ENCODE measurements at regions of chr7 and their contacts with region 1.

Region 1: DNA sequence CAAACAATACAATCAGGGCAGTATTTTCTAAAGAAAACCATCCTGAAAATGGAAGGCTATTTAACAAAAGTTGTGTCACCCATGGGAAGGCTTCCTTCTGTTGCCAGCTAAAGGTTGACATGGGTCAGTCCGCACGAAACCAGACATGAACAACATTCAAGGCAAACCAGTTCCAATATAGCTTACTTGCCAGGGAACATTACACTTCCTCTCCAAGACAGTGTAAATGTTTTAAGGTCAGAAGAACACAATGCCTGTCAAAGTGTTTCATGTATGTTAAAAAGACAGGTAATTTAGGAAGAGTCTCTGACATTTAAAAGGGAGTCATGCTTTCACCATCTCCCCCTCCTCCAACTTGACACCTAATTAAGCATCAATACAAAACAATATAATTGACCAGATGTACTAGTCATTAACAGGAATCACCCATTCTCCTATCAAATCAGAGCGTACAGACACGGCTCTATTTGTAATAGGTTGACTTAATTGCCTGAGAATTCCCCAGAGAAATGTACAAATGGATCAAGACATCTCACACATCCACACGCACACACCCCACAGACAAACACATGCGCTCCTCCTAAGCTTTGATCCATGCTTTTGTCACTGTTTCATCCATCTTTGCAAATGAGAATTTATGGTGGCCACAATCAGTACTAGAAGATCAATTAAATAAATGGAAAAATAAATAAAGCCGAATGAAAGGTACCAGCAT is 69.5 kb downstream of the CACNA2D1 start:
- DNase-seq: no peak
- ATAC-seq: peak; percentile 5; the same call in 2 of the 3 replicates
- H3K4me3 ChIP-seq: no peak overlapping the region
- H3K27ac ChIP-seq: no peak overlapping the region
- H3K4me1 ChIP-seq: no peaks in the 10 kb centered on the region
- H3K27me3 ChIP-seq: no peaks in the 10 kb centered on the region
- CTCF ChIP-seq: no peak
- EP300 ChIP-seq: no peak
- POLR2A ChIP-seq: no peak
- RAD21 ChIP-seq: no peak

Region 2: GRCh38 chr7:82247814-82248433 is 126.2 kb before region 1 on chr7:
- CTCF ChIA-PET with region 1: interaction called, 4 read pairs
- POLR2A ChIA-PET with region 1: no interaction called
- RAD21 ChIA-PET with region 1: interaction called, 4 read pairs
- SMC1A ChIA-PET with region 1: interaction called, 11 read pairs
- in situ Hi-C with region 1: no loop called
- intact Hi-C with region 1: no loop called
- DNase-seq: no peak
- ATAC-seq: peak; percentile 84
- H3K4me3 ChIP-seq: no peak overlapping the region
- H3K27ac ChIP-seq: no peak overlapping the region
- H3K4me1 ChIP-seq: no peaks in the 10 kb centered on the region
- H3K27me3 ChIP-seq: no peaks in the 10 kb centered on the region
- CTCF ChIP-seq: peak; percentile 33 to 51 (median 38)
- EP300 ChIP-seq: no peak
- POLR2A ChIP-seq: no peak
- RAD21 ChIP-seq: 0 out of 2 replicates have a peak, but pooled peaks have one; percentile 10

Region 3: GRCh38 chr7:82362129-82362706 is 11.9 kb before region 1 on chr7:
- CTCF ChIA-PET with region 1: interaction called, 10 read pairs
- POLR2A ChIA-PET with region 1: interaction called, 6 read pairs
- RAD21 ChIA-PET with region 1: interaction called, 15 read pairs
- SMC1A ChIA-PET with region 1: interaction called, 34 read pairs
- in situ Hi-C with region 1: no loop called
- intact Hi-C with region 1: no loop called
- DNase-seq: no peak
- ATAC-seq: no peak
- H3K4me3 ChIP-seq: no peak overlapping the region
- H3K27ac ChIP-seq: no peak overlapping the region
- H3K4me1 ChIP-seq: no peaks in the 10 kb centered on the region
- H3K27me3 ChIP-seq: no peaks in the 10 kb centered on the region
- CTCF ChIP-seq: no peak
- EP300 ChIP-seq: no peak
- POLR2A ChIP-seq: no peak
- RAD21 ChIP-seq: no peak

Region 4: GRCh38 chr7:82397879-82398524 is 23.9 kb after region 1 on chr7:
- CTCF ChIA-PET with region 1: interaction called, 3 read pairs
- POLR2A ChIA-PET with region 1: interaction called, 24 read pairs
- RAD21 ChIA-PET with region 1: interaction called, 19 read pairs
- SMC1A ChIA-PET with region 1: interaction called, 158 read pairs
- in situ Hi-C with region 1: no loop called
- intact Hi-C with region 1: no loop called
- DNase-seq: no peak
- ATAC-seq: peak; percentile 42
- H3K4me3 ChIP-seq: no peak overlapping the region
- H3K27ac ChIP-seq: no peak overlapping the region
- H3K4me1 ChIP-seq: no peaks in the 10 kb centered on the region
- H3K27me3 ChIP-seq: no peaks in the 10 kb centered on the region
- CTCF ChIP-seq: no peak
- EP300 ChIP-seq: no peak
- POLR2A ChIP-seq: no peak
- RAD21 ChIP-seq: no peak

Region 5: DNA sequence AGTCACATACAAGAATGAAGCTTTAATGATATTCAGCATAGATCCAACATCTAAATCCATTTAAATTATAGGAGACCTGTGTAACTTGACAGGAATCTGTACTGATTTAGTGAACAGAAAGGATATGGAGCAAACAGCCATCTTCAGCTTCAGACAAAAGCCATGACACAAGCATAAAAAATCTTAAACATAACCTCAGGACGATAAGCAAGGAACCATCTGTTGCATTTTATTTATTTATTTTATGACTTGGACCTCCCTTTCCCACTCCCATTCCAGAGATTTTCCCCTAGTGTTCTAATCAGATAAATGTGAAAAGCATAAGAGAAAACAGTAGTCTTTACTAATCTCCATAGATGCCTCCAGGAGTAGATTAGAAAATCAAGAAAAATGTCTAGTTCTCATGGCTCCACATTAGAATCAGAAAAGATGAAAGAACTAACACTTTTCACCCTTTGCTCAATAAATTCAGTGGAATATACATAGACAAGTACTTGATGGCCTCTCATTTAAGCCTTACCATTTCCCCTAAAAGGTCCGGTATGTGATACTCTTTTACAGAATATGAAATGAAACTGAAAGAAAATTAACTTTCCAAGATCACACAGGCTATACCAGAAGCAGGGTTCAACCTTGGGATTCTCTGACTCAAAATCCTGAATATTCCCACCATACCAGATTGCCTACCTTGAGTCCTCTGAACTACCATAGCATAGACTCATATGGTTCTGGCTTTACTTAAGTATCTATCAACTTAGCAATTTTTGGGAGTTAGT is 54.3 kb after region 1 on chr7:
- CTCF ChIA-PET with region 1: interaction called, 4 read pairs
- POLR2A ChIA-PET with region 1: interaction called, 4 read pairs
- RAD21 ChIA-PET with region 1: interaction called, 5 read pairs
- SMC1A ChIA-PET with region 1: interaction called, 22 read pairs
- in situ Hi-C with region 1: no loop called
- intact Hi-C with region 1: no loop called
- DNase-seq: no peak
- ATAC-seq: peak; percentile 50
- H3K4me3 ChIP-seq: no peak overlapping the region
- H3K27ac ChIP-seq: no peak overlapping the region
- H3K4me1 ChIP-seq: no peaks in the 10 kb centered on the region
- H3K27me3 ChIP-seq: no peaks in the 10 kb centered on the region
- CTCF ChIP-seq: no peak
- EP300 ChIP-seq: no peak
- POLR2A ChIP-seq: no peak
- RAD21 ChIP-seq: no peak

Region 6: DNA sequence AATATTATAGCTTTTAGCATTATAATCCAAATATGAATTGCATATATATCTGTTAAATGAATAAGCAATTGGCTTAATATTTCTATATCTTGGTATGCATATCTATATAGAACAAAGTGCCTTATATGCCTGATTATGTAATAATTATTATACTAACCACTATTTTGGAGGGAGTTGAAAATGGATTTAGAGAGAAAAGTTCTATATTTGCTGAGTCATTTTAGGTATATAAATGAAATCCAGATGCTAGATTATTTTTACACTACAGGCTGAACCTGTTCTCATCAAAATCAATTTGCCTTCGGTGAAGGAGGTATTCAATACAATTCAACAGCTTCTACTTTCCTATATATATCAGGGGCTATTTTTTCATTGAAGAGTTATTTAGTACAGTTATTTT is 512.2 kb after region 1 on chr7:
- CTCF ChIA-PET with region 1: no interaction called
- POLR2A ChIA-PET with region 1: no interaction called
- RAD21 ChIA-PET with region 1: no interaction called
- SMC1A ChIA-PET with region 1: no interaction called
- in situ Hi-C with region 1: no loop called
- intact Hi-C with region 1: no loop called
- DNase-seq: no peak
- ATAC-seq: no peak
- H3K4me3 ChIP-seq: no peak overlapping the region
- H3K27ac ChIP-seq: no peak overlapping the region
- H3K4me1 ChIP-seq: no peaks in the 10 kb centered on the region
- H3K27me3 ChIP-seq: no peaks in the 10 kb centered on the region
- CTCF ChIP-seq: no peak
- EP300 ChIP-seq: no peak
- POLR2A ChIP-seq: no peak
- RAD21 ChIP-seq: no peak

Measured in GM12878 (cell line).